CD8-positive, alpha-beta memory T cell (primary cell): ENCODE measurements at regions of chr5 and their contacts with region 1.

Region 1: GRCh38 chr5:96614110-96614691 is 48.0 kb upstream of the CAST start:
- DNase-seq: peak; percentile 7 to 52 (median 31)
- H3K4me3 ChIP-seq: no peak overlapping the region
- H3K4me3 Mint-ChIP-seq: no peak overlapping the region
- H3K27ac ChIP-seq: no peak overlapping the region
- H3K27ac Mint-ChIP-seq: peak overlapping the region in 1 of 8 donors; percentile 2
- H3K4me1 ChIP-seq: peaks cover 3% of the 10 kb centered on the region
- H3K4me1 Mint-ChIP-seq: peaks cover 4 to 6% (median 5%) of the 10 kb centered on the region in 3 donors
- H3K27me3 ChIP-seq: no peaks in the 10 kb centered on the region
- H3K27me3 Mint-ChIP-seq: peaks cover 9 to 24% of the 10 kb centered on the region in 2 donors

Region 2: DNA sequence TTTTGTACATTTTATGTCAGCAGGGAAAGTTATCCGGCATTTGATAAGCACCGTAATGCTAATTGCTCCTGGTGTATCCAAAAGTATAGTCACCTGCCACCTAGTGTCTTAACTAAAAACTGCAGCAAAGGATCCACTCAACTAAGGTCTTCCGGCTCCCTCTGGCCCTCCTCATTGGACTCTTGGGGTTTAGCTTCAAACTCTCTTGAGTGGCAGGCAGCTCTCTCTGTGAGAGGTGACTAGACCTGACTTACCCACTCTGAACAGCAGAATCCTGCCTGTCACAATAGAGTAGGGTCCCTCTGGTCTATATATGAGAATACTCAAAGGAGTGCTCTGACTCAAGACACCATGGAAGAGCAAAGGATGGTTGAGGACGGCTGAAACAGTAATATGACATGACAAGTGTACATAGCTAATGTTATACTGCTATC is 12.4 kb before region 1 on chr5:
- CTCF ChIA-PET with region 1: interaction called, 10 read pairs
- POLR2A ChIA-PET with region 1: no interaction called
- DNase-seq: peak; percentile 24 to 62 (median 52)
- H3K4me3 ChIP-seq: no peak overlapping the region
- H3K4me3 Mint-ChIP-seq: no peak overlapping the region
- H3K27ac ChIP-seq: no peak overlapping the region
- H3K27ac Mint-ChIP-seq: no peak overlapping the region
- H3K4me1 ChIP-seq: no peaks in the 10 kb centered on the region
- H3K4me1 Mint-ChIP-seq: peaks cover 2 to 3% (median 2%) of the 10 kb centered on the region in 3 donors
- H3K27me3 ChIP-seq: no peaks in the 10 kb centered on the region
- H3K27me3 Mint-ChIP-seq: peaks cover 5 to 13% of the 10 kb centered on the region in 2 donors

Region 3: DNA sequence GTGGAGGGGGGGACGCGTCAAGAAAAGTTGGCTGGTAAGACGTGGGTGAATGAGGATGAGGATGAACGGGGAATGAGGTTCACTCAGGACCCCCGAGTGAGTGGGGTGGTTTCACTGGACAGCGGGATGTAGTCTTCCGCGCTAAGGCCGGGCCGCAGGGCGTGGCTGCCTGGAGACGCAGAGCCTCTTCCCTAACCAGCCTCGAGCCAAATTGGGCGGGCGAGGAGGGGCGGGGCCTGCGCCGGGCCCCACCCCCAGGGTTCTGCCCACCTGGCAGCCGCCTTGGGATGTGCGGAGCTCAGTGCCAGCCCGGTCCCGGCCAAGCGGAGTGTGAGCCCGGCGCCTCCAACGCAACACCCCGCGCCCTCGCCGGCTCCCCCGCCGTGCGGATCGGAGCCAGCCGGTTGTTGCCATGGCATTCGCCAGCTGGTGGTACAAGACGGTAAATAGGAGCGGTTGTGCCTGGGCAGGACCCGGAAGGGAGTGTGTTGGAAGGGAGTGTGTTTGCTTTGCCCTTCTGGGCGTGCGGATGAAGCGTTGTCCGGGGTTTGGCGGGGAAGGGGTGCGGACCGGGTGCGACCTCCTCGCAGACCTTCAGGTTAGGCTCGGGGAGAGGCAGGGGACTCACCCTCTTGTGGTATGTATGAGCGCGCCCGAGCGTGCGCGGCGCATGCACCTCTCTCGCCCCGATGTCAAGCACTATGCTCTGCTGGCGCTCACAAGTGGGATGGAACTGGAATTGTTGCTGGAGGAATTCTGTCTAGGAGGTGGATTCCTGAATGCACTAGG is 48.7 kb after region 1 on chr5:
- CTCF ChIA-PET with region 1: interaction called, 10 read pairs
- POLR2A ChIA-PET with region 1: interaction called, 4 read pairs
- DNase-seq: peak; percentile 80 to 90 (median 84)
- H3K4me3 ChIP-seq: peak overlapping the region; percentile 80
- H3K4me3 Mint-ChIP-seq: peak overlapping the region; percentile 91 to 99 (median 98)
- H3K27ac ChIP-seq: peak overlapping the region; percentile 92
- H3K27ac Mint-ChIP-seq: peak overlapping the region; percentile 97 to 99 (median 98)
- H3K4me1 ChIP-seq: peaks cover 33% of the 10 kb centered on the region
- H3K4me1 Mint-ChIP-seq: peaks cover 55 to 71% (median 67%) of the 10 kb centered on the region in 3 donors
- H3K27me3 ChIP-seq: no peaks in the 10 kb centered on the region
- H3K27me3 Mint-ChIP-seq: no peaks in the 10 kb centered on the region

Region 4: GRCh38 chr5:96729156-96729555 is 115.0 kb after region 1 on chr5:
- CTCF ChIA-PET with region 1: interaction called, 12 read pairs
- POLR2A ChIA-PET with region 1: no interaction called
- DNase-seq: no peak
- H3K4me3 ChIP-seq: no peak overlapping the region
- H3K4me3 Mint-ChIP-seq: no peak overlapping the region
- H3K27ac ChIP-seq: no peak overlapping the region
- H3K27ac Mint-ChIP-seq: peak overlapping the region in 1 of 8 donors; percentile 75
- H3K4me1 ChIP-seq: no peaks in the 10 kb centered on the region
- H3K4me1 Mint-ChIP-seq: peaks cover 8 to 35% (median 33%) of the 10 kb centered on the region in 3 donors
- H3K27me3 ChIP-seq: no peaks in the 10 kb centered on the region
- H3K27me3 Mint-ChIP-seq: no peaks in the 10 kb centered on the region

Region 5: DNA sequence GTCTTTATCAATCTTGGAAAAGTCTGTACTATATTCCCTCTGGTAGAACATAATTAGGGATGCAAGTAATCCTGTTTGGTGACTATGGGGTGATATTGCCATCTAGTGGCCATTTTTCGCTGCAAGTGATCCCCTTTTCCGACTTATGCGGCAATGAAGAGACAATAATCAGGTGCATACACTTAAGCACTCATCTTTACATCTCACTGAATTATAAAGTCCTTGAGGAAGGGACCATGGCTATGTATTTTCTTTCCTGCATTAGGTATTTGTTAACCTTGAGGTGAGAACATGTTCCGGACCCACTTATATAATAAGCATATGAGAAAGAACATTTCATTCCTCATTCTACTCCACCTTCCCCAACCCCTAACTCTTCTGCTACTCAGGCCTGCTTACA is 547.8 kb after region 1 on chr5:
- CTCF ChIA-PET with region 1: interaction called, 10 read pairs
- POLR2A ChIA-PET with region 1: no interaction called
- DNase-seq: peak; percentile 12 to 62 (median 46)
- H3K4me3 ChIP-seq: no peak overlapping the region
- H3K4me3 Mint-ChIP-seq: no peak overlapping the region
- H3K27ac ChIP-seq: no peak overlapping the region
- H3K27ac Mint-ChIP-seq: peak overlapping the region in 2 of 8 donors; percentile 31 to 71
- H3K4me1 ChIP-seq: no peaks in the 10 kb centered on the region
- H3K4me1 Mint-ChIP-seq: peaks cover 3 to 10% (median 8%) of the 10 kb centered on the region in 3 donors
- H3K27me3 ChIP-seq: no peaks in the 10 kb centered on the region
- H3K27me3 Mint-ChIP-seq: peaks cover 5% of the 10 kb centered on the region in 2 donors